Activated CD8-positive, alpha-beta T cell treated with anti-CD3 and anti-CD28 coated beads, Interleukin-2, amount 10 ng/mL, durations not matched to agents 7 days and 5 days (primary cell): ENCODE measurements at regions of chr2 and their contacts with region 1.

Region 1: GRCh38 chr2:70964596-70965386 is 13.6 kb upstream of the ANKRD53 start:
- DNase-seq: peak; percentile 84
- ATAC-seq: peak; percentile 97
- H3K4me3 Mint-ChIP-seq: peak overlapping the region; percentile 82
- H3K27ac Mint-ChIP-seq: peak overlapping the region; percentile 50
- H3K4me1 Mint-ChIP-seq: peaks cover 5% of the 10 kb centered on the region
- H3K27me3 Mint-ChIP-seq: peaks cover 25% of the 10 kb centered on the region

Region 2: DNA sequence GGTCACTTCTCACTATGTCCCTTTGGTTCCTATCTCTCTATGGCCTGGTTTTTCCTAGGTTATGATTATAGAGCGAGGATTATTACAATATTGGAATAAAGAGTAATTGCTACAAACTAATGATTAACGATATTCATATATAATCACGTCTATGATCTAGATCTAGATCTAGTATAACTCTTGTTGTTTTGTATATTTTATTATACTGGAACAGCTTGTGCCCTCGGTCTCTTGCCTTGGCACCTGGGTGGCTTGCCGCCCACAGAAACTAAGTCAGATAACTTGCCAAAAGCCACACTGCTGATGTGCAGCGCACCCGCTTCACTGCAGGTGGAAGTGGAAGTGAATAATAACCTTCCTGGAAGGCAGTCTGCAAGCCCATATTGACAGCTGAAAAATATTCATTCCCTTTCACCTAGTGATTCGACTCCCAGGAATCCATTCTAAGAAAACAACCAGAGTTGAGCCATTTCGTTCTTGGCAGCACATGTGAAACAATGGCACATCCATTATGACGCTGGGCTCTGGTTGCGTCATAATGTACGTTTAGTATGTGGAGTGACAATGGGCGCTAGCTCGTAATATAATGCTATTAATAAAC is 12.9 kb after region 1 on chr2:
- CTCF ChIA-PET with region 1: interaction called, 60 read pairs
- POLR2A ChIA-PET with region 1: no interaction called
- DNase-seq: peak; percentile 36
- ATAC-seq: no peak
- H3K4me3 Mint-ChIP-seq: peak overlapping the region; percentile 75
- H3K27ac Mint-ChIP-seq: peak overlapping the region; percentile 84
- H3K4me1 Mint-ChIP-seq: peaks cover 17% of the 10 kb centered on the region
- H3K27me3 Mint-ChIP-seq: peaks cover 11% of the 10 kb centered on the region

Region 3: GRCh38 chr2:71000780-71001591 is 36.2 kb after region 1 on chr2:
- CTCF ChIA-PET with region 1: interaction called, 30 read pairs
- POLR2A ChIA-PET with region 1: no interaction called
- DNase-seq: peak; percentile 88
- ATAC-seq: peak; percentile 92
- H3K4me3 Mint-ChIP-seq: peak overlapping the region; percentile 69
- H3K27ac Mint-ChIP-seq: peak overlapping the region; percentile 90
- H3K4me1 Mint-ChIP-seq: peaks cover 37% of the 10 kb centered on the region
- H3K27me3 Mint-ChIP-seq: no peaks in the 10 kb centered on the region

Region 4: DNA sequence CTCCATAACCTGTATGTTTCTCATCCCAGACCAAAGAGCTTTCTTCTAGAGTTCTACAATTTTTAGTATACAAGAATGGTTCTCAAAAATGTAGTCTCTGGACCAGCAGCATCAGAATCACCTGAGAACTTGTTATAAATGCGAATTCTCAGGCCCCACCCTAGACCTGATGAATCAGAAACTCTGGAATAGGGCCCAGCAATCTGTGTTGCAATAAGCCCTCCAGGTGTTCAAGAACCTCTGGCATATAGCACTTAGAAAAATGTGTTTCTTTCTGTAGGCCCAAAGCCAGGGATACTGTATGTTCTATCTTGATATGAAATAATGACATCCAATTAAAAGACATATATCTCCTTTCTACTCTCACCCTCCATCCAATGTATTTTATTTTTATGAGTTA is 251.7 kb after region 1 on chr2:
- CTCF ChIA-PET with region 1: no interaction called
- POLR2A ChIA-PET with region 1: no interaction called
- DNase-seq: no peak
- ATAC-seq: no peak
- H3K4me3 Mint-ChIP-seq: no peak overlapping the region
- H3K27ac Mint-ChIP-seq: no peak overlapping the region
- H3K4me1 Mint-ChIP-seq: no peaks in the 10 kb centered on the region
- H3K27me3 Mint-ChIP-seq: no peaks in the 10 kb centered on the region